G401 (cell line): ENCODE measurements at regions of chr1 and their contacts with region 1.

Region 1: GRCh38 chr1:27603681-27604578 is at the start of gene AHDC1:
- DNase-seq: peak; percentile 84
- total RNA-seq, gene AHDC1: 6.5 and 8.1 TPM in 2 replicates

Region 2: DNA sequence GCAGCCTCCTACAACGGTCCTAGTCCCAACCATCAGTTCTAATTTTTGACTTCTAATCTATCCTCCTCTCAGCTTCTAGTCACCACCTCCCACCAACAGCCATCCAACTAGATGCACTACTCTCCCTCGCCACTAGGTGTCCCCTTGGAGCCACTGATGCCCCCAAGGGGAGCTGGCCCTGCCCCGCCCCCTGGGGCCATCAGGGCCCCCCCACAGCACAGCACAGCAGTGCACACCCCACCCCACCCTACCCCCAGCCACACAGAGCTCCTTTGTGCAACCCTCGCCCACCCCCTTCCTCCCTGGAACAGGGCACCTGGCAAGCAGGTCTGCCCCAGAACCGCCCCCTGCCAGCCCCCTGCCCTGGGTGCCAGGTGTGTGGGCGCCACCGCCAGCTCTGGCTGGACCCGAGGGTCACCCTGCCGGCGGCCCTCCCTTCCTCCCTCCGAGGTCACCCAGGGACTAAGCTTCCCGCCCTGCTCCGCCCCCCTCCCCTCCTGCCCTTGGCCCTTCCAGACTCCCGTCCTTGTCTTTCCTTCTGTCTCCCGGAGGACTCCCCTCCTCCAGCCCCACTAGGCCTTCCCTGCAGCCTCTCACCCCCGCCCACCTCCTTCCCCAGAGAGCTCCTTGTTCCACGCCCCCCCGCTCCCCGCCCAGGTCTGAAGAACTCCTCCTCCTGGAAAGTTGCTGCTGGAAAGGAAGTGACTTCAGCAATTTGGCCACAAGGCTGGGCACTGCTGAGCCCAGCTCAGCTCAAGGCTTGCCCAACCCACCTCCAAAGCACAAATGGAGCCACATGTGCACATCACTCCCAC is 46.9 kb before region 1 on chr1:
- in situ Hi-C with region 1: loop called (anchors 5 kb)
- DNase-seq: peak; percentile 65

Region 3: GRCh38 chr1:27689423-27690173 is 85.7 kb after region 1 on chr1:
- in situ Hi-C with region 1: no loop called
- DNase-seq: no peak